Activated T-helper 1 cell treated with anti-CD3 and anti-CD28 coated beads, Interleukin-12 subunit alpha, Interleukin-12 subunit beta, Interleukin-2, Interleukin-4 antibody, amounts not matched to agents 30 ng/mL and 10 ng/mL and 1 ng/mL, durations not matched to agents 14 hours and 24 hours and 36 hours (primary cell): ENCODE measurements at regions of chr7 and their contacts with region 1.

Region 1: GRCh38 chr7:123154231-123154860 is 45.4 kb downstream of the SLC13A1 start:
- DNase-seq: peak; percentile 12
- H3K4me3 Mint-ChIP-seq: no peak overlapping the region
- H3K27ac Mint-ChIP-seq: no peak overlapping the region
- H3K4me1 Mint-ChIP-seq: no peaks in the 10 kb centered on the region
- H3K27me3 Mint-ChIP-seq: no peaks in the 10 kb centered on the region

Region 2: GRCh38 chr7:122219253-122219865 is 935.0 kb before region 1 on chr7:
- intact Hi-C with region 1: loop called (anchors 5 kb)
- DNase-seq: no peak
- H3K4me3 Mint-ChIP-seq: no peak overlapping the region
- H3K27ac Mint-ChIP-seq: no peak overlapping the region
- H3K4me1 Mint-ChIP-seq: no peaks in the 10 kb centered on the region
- H3K27me3 Mint-ChIP-seq: no peaks in the 10 kb centered on the region

Region 3: DNA sequence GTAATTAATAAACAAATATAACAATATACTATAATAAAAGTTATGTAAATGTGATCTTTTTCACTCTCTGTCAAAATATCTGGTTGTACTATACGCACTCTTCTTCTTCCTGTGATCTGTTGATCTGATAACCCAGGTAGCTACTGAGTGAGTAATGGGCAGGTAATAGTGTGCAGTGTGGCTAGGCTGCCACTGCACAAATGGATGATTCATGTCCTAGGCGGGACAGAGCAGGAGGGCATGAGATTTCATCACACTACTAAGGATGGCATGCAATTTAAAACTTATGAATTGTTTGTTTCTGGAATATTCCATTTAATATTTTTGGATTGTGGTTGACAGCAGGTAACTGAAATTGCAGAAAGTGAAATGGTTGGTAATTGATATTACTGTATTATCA is 203.3 kb before region 1 on chr7:
- intact Hi-C with region 1: no loop called
- DNase-seq: no peak
- H3K4me3 Mint-ChIP-seq: no peak overlapping the region
- H3K27ac Mint-ChIP-seq: no peak overlapping the region
- H3K4me1 Mint-ChIP-seq: no peaks in the 10 kb centered on the region
- H3K27me3 Mint-ChIP-seq: no peaks in the 10 kb centered on the region

Region 4: GRCh38 chr7:123367484-123368122 is 213.3 kb after region 1 on chr7:
- intact Hi-C with region 1: loop called (anchors 10 kb)
- DNase-seq: no peak
- H3K4me3 Mint-ChIP-seq: no peak overlapping the region
- H3K27ac Mint-ChIP-seq: no peak overlapping the region
- H3K4me1 Mint-ChIP-seq: no peaks in the 10 kb centered on the region
- H3K27me3 Mint-ChIP-seq: no peaks in the 10 kb centered on the region